B cell (primary cell): ENCODE measurements at regions of chr20 and their contacts with region 1.

Region 1: GRCh38 chr20:18412221-18412901 is 54.5 kb downstream of the DZANK1 start:
- DNase-seq: peak; percentile 52
- ATAC-seq: peak; percentile 20
- H3K4me3 ChIP-seq: peak overlapping the region in 1 of 5 experiments; percentile 25
- H3K4me3 Mint-ChIP-seq: peak overlapping the region; percentile 63
- H3K27ac ChIP-seq: peak overlapping the region; percentile 65 to 70
- H3K27ac Mint-ChIP-seq: peak overlapping the region; percentile 70
- H3K4me1 ChIP-seq: peaks cover 7 to 15% of the 10 kb centered on the region in 2 donors
- H3K4me1 Mint-ChIP-seq: peaks cover 11% of the 10 kb centered on the region
- H3K27me3 ChIP-seq: no peaks in the 10 kb centered on the region
- H3K27me3 Mint-ChIP-seq: no peaks in the 10 kb centered on the region
- CTCF ChIP-seq: no peak

Region 2: DNA sequence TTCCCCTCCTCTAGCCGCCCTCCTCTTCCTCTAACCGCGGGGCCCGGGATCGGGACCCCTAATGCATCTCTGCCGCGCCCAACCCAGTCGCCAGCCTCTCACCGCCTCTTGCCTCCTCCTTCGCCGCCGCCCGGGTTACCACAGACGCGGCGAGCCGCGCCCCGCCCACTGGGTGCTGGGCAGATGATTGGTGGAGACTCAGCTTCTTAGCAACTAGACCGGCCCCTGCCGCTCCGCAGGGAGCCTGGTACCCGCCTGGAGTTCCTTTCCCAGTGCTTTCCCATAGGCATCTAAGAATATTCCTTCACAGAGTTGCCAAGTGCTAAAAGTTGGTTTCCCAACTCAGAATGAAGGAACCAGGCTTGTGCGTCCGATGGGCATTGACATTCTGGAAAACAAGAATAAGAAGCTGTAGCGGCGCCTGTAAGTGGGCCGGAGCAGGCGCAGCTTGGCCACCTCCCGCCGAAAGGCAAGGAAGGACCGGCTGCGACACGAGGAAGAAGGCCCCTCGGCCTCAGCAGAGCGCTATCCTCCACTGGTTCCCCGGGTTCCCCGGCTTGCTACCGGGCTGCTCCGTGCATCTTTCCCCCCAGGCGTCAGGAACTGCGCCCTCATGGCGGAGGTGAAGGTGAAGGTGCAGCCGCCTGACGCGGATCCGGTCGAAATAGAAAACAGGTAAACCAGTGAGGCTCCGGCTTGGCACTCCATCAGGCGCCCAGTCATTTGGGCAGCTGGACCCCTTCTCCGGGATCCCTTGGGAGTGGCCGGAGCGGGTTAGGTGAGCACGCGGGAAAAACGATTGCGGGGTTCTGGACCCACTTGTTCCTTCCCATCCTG is 54.8 kb after region 1 on chr20 and contains the starts of genes DZANK1 and POLR3F:
- CTCF ChIA-PET with region 1: interaction called, 4 read pairs
- POLR2A ChIA-PET with region 1: no interaction called
- intact Hi-C with region 1: loop called (anchors 1 kb)
- DNase-seq: peak; percentile 94
- ATAC-seq: peak; percentile 95
- H3K4me3 ChIP-seq: peak within 1 kb of the TSS; percentile 54 to 97 (median 85)
- H3K4me3 Mint-ChIP-seq: peak within 1 kb of the TSS; percentile 97
- H3K27ac ChIP-seq: peak within 1 kb of the TSS; percentile 39 to 81
- H3K27ac Mint-ChIP-seq: peak within 1 kb of the TSS; percentile 97
- H3K4me1 ChIP-seq: peaks cover 12 to 15% of the 10 kb centered on the region in 2 donors
- H3K4me1 Mint-ChIP-seq: peaks cover 25% of the 10 kb centered on the region
- H3K27me3 ChIP-seq: no peaks in the 10 kb centered on the region
- H3K27me3 Mint-ChIP-seq: no peaks in the 10 kb centered on the region
- CTCF ChIP-seq: no peak
- total RNA-seq, gene DZANK1: 5.6 TPM in 2 replicates
- total RNA-seq, gene POLR3F: 13.1 and 13.7 TPM in 2 replicates

Region 3: GRCh38 chr20:18496740-18497592 is 84.6 kb after region 1 on chr20 and contains the start of gene RBBP9:
- CTCF ChIA-PET with region 1: no interaction called
- POLR2A ChIA-PET with region 1: no interaction called
- intact Hi-C with region 1: loop called (anchors 2 kb)
- DNase-seq: peak; percentile 81
- ATAC-seq: peak; percentile 100
- H3K4me3 ChIP-seq: peak within 1 kb of the TSS; percentile 74 to 96 (median 87)
- H3K4me3 Mint-ChIP-seq: peak within 1 kb of the TSS; percentile 98
- H3K27ac ChIP-seq: peak within 1 kb of the TSS; percentile 38 to 78
- H3K27ac Mint-ChIP-seq: peak within 1 kb of the TSS; percentile 89
- H3K4me1 ChIP-seq: peaks cover 7 to 11% of the 10 kb centered on the region in 2 donors
- H3K4me1 Mint-ChIP-seq: peaks cover 18% of the 10 kb centered on the region
- H3K27me3 ChIP-seq: no peaks in the 10 kb centered on the region
- H3K27me3 Mint-ChIP-seq: peaks cover 3% of the 10 kb centered on the region
- CTCF ChIP-seq: no peak
- total RNA-seq, gene RBBP9: 9.3 and 10.2 TPM in 2 replicates

Region 4: DNA sequence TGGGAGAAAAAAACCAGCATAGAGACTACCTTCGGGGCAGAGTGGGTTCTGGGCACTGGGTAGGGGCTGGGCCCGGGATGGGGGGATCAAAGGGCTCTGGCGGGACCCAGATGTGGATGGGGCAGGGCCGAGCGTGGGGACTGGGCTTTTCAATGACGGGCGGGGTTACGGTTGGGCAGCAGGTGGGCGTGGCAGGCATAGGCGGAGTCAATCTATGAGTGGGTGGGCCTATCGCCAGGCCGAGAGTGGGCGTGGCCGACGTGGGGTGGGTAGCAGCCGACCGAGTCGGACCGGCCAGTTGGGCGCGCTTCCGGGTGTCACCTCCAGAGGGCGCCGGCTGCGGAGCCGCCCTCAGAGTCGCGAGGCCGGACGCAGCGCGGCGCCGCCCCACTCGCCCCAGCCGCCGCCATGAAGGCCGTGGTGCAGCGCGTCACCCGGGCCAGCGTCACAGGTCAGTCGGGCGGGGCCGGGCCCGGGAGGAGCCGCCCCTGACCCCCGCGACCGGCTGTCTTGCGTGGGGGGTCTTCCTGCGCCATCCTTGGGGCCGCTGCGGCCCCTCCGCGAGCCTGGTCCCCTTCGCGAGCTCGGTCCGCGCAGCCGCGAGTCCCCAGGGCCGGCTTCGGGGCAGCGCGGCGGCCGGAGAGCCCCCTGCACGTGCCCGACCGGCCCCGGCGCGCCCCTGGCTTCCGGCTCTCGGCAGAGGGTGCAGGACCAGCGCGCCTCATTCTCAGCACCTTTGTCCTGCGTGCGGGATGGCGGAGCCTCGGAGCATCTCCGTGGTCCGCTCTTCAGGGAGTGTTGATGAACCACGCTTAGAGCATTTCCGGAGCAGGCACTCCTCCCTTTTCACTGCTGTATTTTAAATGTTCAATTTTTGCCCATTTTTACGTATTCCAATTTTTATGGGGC is 175.6 kb after region 1 on chr20 and contains the start of gene DTD1:
- CTCF ChIA-PET with region 1: no interaction called
- POLR2A ChIA-PET with region 1: no interaction called
- intact Hi-C with region 1: loop called (anchors 2 kb)
- DNase-seq: peak; percentile 89
- ATAC-seq: peak; percentile 96
- H3K4me3 ChIP-seq: peak within 1 kb of the TSS; percentile 47 to 77 (median 73)
- H3K4me3 Mint-ChIP-seq: peak within 1 kb of the TSS; percentile 94
- H3K27ac ChIP-seq: peak within 1 kb of the TSS; percentile 44 to 58
- H3K27ac Mint-ChIP-seq: peak within 1 kb of the TSS; percentile 86
- H3K4me1 ChIP-seq: peaks cover 17% of the 10 kb centered on the region in 2 donors
- H3K4me1 Mint-ChIP-seq: peaks cover 23% of the 10 kb centered on the region
- H3K27me3 ChIP-seq: peaks cover 0 to 10% (median 2%) of the 10 kb centered on the region in 4 experiments
- H3K27me3 Mint-ChIP-seq: peaks cover 8% of the 10 kb centered on the region
- CTCF ChIP-seq: peak; percentile 68
- total RNA-seq, gene DTD1: 18.7 and 18.9 TPM in 2 replicates

Region 5: GRCh38 chr20:18632196-18633009 is 220.0 kb after region 1 on chr20:
- CTCF ChIA-PET with region 1: interaction called, 13 read pairs
- POLR2A ChIA-PET with region 1: no interaction called
- intact Hi-C with region 1: no loop called
- DNase-seq: peak; percentile 67
- ATAC-seq: peak; percentile 93
- H3K4me3 ChIP-seq: no peak overlapping the region
- H3K4me3 Mint-ChIP-seq: no peak overlapping the region
- H3K27ac ChIP-seq: no peak overlapping the region
- H3K27ac Mint-ChIP-seq: no peak overlapping the region
- H3K4me1 ChIP-seq: no peaks in the 10 kb centered on the region
- H3K4me1 Mint-ChIP-seq: no peaks in the 10 kb centered on the region
- H3K27me3 ChIP-seq: no peaks in the 10 kb centered on the region
- H3K27me3 Mint-ChIP-seq: no peaks in the 10 kb centered on the region
- CTCF ChIP-seq: peak; percentile 95

Region 6: GRCh38 chr20:19056909-19057308 is 644.5 kb after region 1 on chr20:
- CTCF ChIA-PET with region 1: interaction called, 4 read pairs
- POLR2A ChIA-PET with region 1: no interaction called
- intact Hi-C with region 1: loop called (anchors 2 kb)
- DNase-seq: peak; percentile 22
- ATAC-seq: no peak
- H3K4me3 ChIP-seq: no peak overlapping the region
- H3K4me3 Mint-ChIP-seq: no peak overlapping the region
- H3K27ac ChIP-seq: no peak overlapping the region
- H3K27ac Mint-ChIP-seq: no peak overlapping the region
- H3K4me1 ChIP-seq: no peaks in the 10 kb centered on the region
- H3K4me1 Mint-ChIP-seq: no peaks in the 10 kb centered on the region
- H3K27me3 ChIP-seq: no peaks in the 10 kb centered on the region
- H3K27me3 Mint-ChIP-seq: no peaks in the 10 kb centered on the region
- CTCF ChIP-seq: peak; percentile 23

Region 7: DNA sequence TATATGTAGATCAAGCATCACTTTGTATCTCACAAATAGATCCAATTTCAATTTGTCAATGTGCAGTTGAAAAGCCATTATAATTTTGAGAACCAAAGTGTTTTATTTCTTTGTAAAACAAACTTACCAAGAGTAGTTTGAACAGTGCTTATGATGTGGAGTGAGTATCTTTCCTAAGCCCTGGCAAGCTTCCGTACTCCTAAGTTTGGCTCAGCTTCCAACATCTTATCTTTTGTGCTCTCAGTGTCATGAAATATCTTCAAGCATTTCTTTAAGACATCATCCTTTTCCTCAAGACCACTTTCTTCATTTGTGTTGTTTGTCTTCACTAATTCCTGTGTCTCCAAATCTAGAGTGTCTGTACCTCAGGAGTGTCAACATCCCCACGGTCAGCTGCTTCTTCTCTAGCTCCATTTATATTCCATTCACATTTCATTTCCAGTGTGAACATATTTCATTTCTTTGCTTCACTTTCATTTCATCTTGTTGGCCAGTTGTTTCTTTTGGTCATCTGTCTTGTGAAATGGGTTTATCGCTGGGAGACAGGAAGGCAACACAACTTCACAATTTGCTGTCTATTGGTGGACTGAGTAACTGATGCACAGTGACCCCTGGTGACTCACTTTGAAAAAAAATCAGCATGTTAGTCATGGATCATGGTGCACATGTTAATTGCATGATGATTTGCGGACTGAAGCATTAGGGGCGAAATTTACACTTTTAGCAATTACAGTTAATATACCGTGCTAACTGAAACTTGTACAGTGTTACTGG is 836.9 kb after region 1 on chr20:
- CTCF ChIA-PET with region 1: interaction called, 4 read pairs
- POLR2A ChIA-PET with region 1: no interaction called
- intact Hi-C with region 1: loop called (anchors 5 kb)
- DNase-seq: no peak
- ATAC-seq: no peak
- H3K4me3 ChIP-seq: no peak overlapping the region
- H3K4me3 Mint-ChIP-seq: no peak overlapping the region
- H3K27ac ChIP-seq: no peak overlapping the region
- H3K27ac Mint-ChIP-seq: no peak overlapping the region
- H3K4me1 ChIP-seq: no peaks in the 10 kb centered on the region
- H3K4me1 Mint-ChIP-seq: no peaks in the 10 kb centered on the region
- H3K27me3 ChIP-seq: no peaks in the 10 kb centered on the region
- H3K27me3 Mint-ChIP-seq: peaks cover 6% of the 10 kb centered on the region
- CTCF ChIP-seq: no peak